K562 (cell line): ENCODE measurements at regions of chr11 and their contacts with region 1.

Region 1: GRCh38 chr11:118198370-118198769 is 21.9 kb upstream of the SCN2B start:
- DNase-seq: peak; percentile 78 to 83 (median 80)
- ATAC-seq: peak; percentile 98
- H3K4me3 ChIP-seq: no peak overlapping the region
- H3K27ac ChIP-seq: no peak overlapping the region
- H3K4me1 ChIP-seq: 0 out of 5 replicates have a peak, but pooled peaks cover 0 to 3% of the 10 kb centered on the region in 2 experiments
- H3K27me3 ChIP-seq: peaks cover 0 to 33% of the 10 kb centered on the region in 2 experiments; a peak in 4 of 5 replicates
- CTCF ChIP-seq: peak; percentile 85 to 90 (median 86)
- EP300 ChIP-seq: no peak
- POLR2A ChIP-seq: no peak
- RAD21 ChIP-seq: peak; percentile 95

Region 2: DNA sequence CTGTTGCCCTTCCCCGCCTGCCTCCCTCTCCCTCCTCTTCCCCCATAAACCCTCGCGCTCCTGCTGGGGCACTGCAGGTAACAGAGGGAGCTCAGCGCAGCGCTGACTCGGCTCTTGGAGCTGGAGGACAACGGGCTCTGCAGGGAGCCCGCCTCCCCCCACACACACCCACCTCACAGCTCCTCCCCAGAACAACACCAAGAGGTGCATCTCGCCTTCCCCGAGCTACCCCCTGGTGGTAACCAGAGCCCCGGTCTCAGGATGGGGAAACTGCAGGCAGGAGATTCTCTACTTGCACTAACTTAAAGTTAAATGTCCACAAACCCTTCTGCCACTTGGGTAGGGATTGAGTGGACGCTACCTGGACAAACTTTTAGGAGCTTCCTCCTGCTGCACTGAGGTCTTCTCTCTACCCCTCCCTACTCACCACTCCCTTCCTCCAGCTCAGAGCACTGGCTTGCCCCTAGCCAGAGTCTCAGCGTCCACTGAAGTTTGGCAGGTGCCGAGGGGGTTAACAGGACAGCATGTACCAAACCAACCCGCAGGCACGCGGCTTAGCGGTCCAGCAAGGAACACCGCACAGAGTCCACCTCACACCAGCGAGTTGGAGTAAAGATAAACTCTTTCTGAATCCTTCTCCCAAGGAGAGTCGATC is 41.7 kb before region 1 on chr11:
- CTCF ChIA-PET with region 1: no interaction called
- POLR2A ChIA-PET with region 1: no interaction called
- in situ Hi-C with region 1: no loop called
- intact Hi-C with region 1: no loop called
- DNase-seq: peak; percentile 19 to 53 (median 46)
- ATAC-seq: peak; percentile 61
- H3K4me3 ChIP-seq: no peak overlapping the region
- H3K27ac ChIP-seq: no peak overlapping the region
- H3K4me1 ChIP-seq: peaks cover 0 to 16% of the 10 kb centered on the region in 2 experiments; a peak in 2 of 5 replicates
- H3K27me3 ChIP-seq: peaks cover 50 to 96% of the 10 kb centered on the region in 2 experiments
- CTCF ChIP-seq: 0 out of 6 replicates have a peak, but pooled peaks of 1 of the 3 experiments have one; percentile 3
- EP300 ChIP-seq: no peak
- POLR2A ChIP-seq: no peak
- RAD21 ChIP-seq: no peak

Region 3: DNA sequence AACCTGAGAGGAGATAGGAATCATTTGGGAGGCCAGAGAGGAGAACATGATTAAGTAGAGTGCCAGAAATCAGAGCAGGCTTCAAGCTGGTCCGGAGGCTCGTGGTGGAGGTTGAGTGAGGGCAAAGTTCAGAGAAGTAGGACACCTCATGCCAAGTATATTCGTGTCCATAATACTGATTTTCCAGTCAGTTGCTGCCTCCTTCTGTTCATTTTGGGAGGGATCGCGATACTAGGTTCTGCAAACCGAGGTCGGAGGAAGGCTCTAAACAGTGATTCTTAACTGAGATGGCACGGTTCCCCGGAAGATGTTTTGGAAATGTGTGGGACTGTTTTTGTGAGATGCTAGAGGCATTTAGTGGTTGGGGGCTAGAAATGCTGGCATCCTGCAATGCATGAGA is 92.6 kb after region 1 on chr11:
- CTCF ChIA-PET with region 1: interaction called, 39 read pairs
- POLR2A ChIA-PET with region 1: interaction called, 3 read pairs
- in situ Hi-C with region 1: loop called (anchors 5 kb)
- intact Hi-C with region 1: loop called (anchors 2 kb)
- DNase-seq: peak in 1 of 4 experiments; percentile 30
- ATAC-seq: peak; percentile 68
- H3K4me3 ChIP-seq: no peak overlapping the region
- H3K27ac ChIP-seq: no peak overlapping the region
- H3K4me1 ChIP-seq: no peaks in the 10 kb centered on the region; a peak in 1 of 5 replicates
- H3K27me3 ChIP-seq: peaks cover 0 to 8% of the 10 kb centered on the region in 2 experiments; a peak in 2 of 5 replicates
- CTCF ChIP-seq: peak; percentile 41 to 65 (median 46); a peak in 4 of 6 replicates
- EP300 ChIP-seq: no peak
- POLR2A ChIP-seq: no peak
- RAD21 ChIP-seq: peak; percentile 91 to 92

Region 4: DNA sequence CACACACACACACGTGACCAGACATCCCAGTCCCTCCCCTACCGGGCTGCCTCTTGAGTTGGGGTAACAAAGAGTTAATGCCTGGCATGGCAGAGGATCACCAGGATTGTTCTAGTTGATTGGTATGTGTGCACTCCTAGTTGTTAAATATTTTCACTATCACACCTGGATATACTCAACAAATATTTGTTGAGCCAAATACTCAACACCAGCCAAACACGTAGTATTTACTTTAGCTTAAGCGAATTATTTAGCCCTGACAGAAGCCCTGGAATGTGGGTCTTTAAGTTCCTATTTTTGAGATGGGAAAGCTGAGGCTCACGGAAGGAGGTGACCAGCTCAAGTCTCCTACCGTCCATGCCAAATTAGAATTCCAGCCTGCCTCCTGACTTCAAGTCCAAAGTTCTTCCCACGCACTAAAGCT is 116.6 kb after region 1 on chr11:
- CTCF ChIA-PET with region 1: no interaction called
- POLR2A ChIA-PET with region 1: no interaction called
- in situ Hi-C with region 1: no loop called
- intact Hi-C with region 1: loop called (anchors 1 kb)
- DNase-seq: no peak
- ATAC-seq: no peak
- H3K4me3 ChIP-seq: no peak overlapping the region
- H3K27ac ChIP-seq: no peak overlapping the region
- H3K4me1 ChIP-seq: peaks cover 25 to 55% of the 10 kb centered on the region in 2 experiments
- H3K27me3 ChIP-seq: peaks cover 0 to 7% of the 10 kb centered on the region in 2 experiments; a peak in 1 of 5 replicates
- CTCF ChIP-seq: no peak
- EP300 ChIP-seq: no peak
- POLR2A ChIP-seq: no peak
- RAD21 ChIP-seq: no peak

Region 5: GRCh38 chr11:118488480-118489109 is 290.2 kb after region 1 on chr11:
- CTCF ChIA-PET with region 1: interaction called, 14 read pairs
- POLR2A ChIA-PET with region 1: no interaction called
- in situ Hi-C with region 1: loop called (anchors 5 kb)
- intact Hi-C with region 1: loop called (anchors 1 kb)
- DNase-seq: peak; percentile 62 to 82 (median 66)
- ATAC-seq: peak; percentile 89
- H3K4me3 ChIP-seq: no peak overlapping the region
- H3K27ac ChIP-seq: no peak overlapping the region
- H3K4me1 ChIP-seq: no peaks in the 10 kb centered on the region
- H3K27me3 ChIP-seq: no peaks in the 10 kb centered on the region
- CTCF ChIP-seq: peak; percentile 76 to 91 (median 84)
- EP300 ChIP-seq: no peak
- POLR2A ChIP-seq: no peak
- RAD21 ChIP-seq: peak; percentile 81 to 87